Heart right ventricle (tissue), 16 donors: ENCODE measurements at regions of chr10 and their contacts with region 1.

Region 1: GRCh38 chr10:4767033-4767814 is 58.8 kb upstream of the AKR1E2 start:
- DNase-seq: peak in 1 of 2 donors; percentile 30
- ATAC-seq: peak in 6 of 8 donors; percentile 40 to 72 (median 66)
- H3K4me3 ChIP-seq: no peak overlapping the region
- H3K27ac ChIP-seq: peak overlapping the region in 9 of 10 donors; percentile 4 to 75 (median 39)
- H3K4me1 ChIP-seq: peaks cover 5 to 64% (median 38%) of the 10 kb centered on the region in 9 donors
- H3K27me3 ChIP-seq: no peaks in the 10 kb centered on the region
- CTCF ChIP-seq: peak; percentile 51 to 92 (median 82)

Region 2: DNA sequence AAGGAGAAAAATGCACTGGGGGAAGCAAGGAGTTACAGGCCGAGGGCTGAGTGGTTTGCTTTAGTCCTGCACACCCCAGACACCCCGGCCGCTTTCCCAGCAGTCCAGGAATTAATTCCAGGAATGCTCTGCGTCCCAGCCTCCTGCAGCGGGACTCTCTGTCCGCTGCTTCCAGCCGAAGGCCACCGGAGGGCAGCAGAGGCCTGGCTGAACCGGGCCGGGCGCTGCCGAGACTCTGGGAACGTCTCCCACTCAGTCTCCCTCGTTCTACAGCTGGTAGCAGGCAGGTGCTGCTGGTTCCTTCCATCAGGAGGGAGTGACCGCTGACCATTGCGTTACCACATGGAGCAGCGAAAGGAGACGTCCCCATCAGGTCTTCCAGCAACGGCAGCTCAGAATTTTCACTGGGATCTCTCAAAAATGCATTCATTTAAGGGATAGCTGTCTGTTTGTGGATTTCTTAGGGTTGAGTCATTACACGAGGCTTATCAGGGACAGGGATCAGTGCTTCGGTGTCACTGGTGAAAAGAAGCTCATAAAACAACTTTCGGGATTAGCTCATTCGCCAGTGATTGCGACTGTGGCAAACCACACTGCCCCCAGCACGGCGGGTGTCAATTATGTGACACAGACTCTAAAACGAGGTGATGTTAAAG is 1569.7 kb before region 1 on chr10:
- intact Hi-C with region 1: loop called (anchors 1 to 10 kb)
- DNase-seq: peak; percentile 77 to 83
- ATAC-seq: peak; percentile 88 to 95 (median 94)
- H3K4me3 ChIP-seq: peak overlapping the region in 9 of 10 donors; percentile 0 to 42 (median 30)
- H3K27ac ChIP-seq: peak overlapping the region in 5 of 10 donors; percentile 41 to 62 (median 43)
- H3K4me1 ChIP-seq: peaks cover 3 to 25% (median 9%) of the 10 kb centered on the region in 9 donors
- H3K27me3 ChIP-seq: peaks cover 0 to 21% (median 0%) of the 10 kb centered on the region in 7 donors
- CTCF ChIP-seq: peak in 8 of 9 donors; percentile 86 to 97 (median 93)

Region 3: GRCh38 chr10:3452173-3452626 is 1315.0 kb before region 1 on chr10:
- intact Hi-C with region 1: loop called in 1 of 10 experiments (anchors 10 kb)
- DNase-seq: peak in 1 of 2 donors; percentile 52
- ATAC-seq: peak in 7 of 8 donors; percentile 71 to 92 (median 84)
- H3K4me3 ChIP-seq: peak overlapping the region in 3 of 10 donors; percentile 2 to 20 (median 11)
- H3K27ac ChIP-seq: peak overlapping the region; percentile 10 to 85 (median 76)
- H3K4me1 ChIP-seq: peaks cover 0 to 49% (median 28%) of the 10 kb centered on the region in 9 donors
- H3K27me3 ChIP-seq: no peaks in the 10 kb centered on the region
- CTCF ChIP-seq: peak; percentile 21 to 72 (median 48)

Region 4: GRCh38 chr10:4241724-4242345 is 525.4 kb before region 1 on chr10:
- intact Hi-C with region 1: loop called in 2 of 10 experiments (anchors 5 to 10 kb)
- DNase-seq: peak in 1 of 2 donors; percentile 87
- ATAC-seq: peak; percentile 82 to 92 (median 90)
- H3K4me3 ChIP-seq: peak overlapping the region in 9 of 10 donors; percentile 10 to 56 (median 45)
- H3K27ac ChIP-seq: peak overlapping the region; percentile 72 to 96 (median 89)
- H3K4me1 ChIP-seq: peaks cover 0 to 62% (median 46%) of the 10 kb centered on the region in 9 donors
- H3K27me3 ChIP-seq: no peaks in the 10 kb centered on the region
- CTCF ChIP-seq: no peak

Region 5: GRCh38 chr10:4498711-4499251 is 268.4 kb before region 1 on chr10:
- intact Hi-C with region 1: loop called in 1 of 10 experiments (anchors 10 kb)
- DNase-seq: peak in 1 of 2 donors; percentile 23
- ATAC-seq: peak; percentile 77 to 93 (median 90)
- H3K4me3 ChIP-seq: no peak overlapping the region
- H3K27ac ChIP-seq: peak overlapping the region; percentile 14 to 90 (median 78)
- H3K4me1 ChIP-seq: peaks cover 5 to 24% (median 14%) of the 10 kb centered on the region in 9 donors
- H3K27me3 ChIP-seq: no peaks in the 10 kb centered on the region
- CTCF ChIP-seq: no peak

Region 6: GRCh38 chr10:4663162-4663904 is 103.9 kb before region 1 on chr10:
- intact Hi-C with region 1: loop called in 9 of 10 experiments (anchors 1 to 5 kb)
- DNase-seq: peak in 1 of 2 donors; percentile 88
- ATAC-seq: peak; percentile 84 to 95 (median 94)
- H3K4me3 ChIP-seq: peak overlapping the region in 5 of 10 donors; percentile 4 to 22 (median 13)
- H3K27ac ChIP-seq: peak overlapping the region; percentile 87 to 96 (median 92)
- H3K4me1 ChIP-seq: peaks cover 0 to 52% (median 36%) of the 10 kb centered on the region in 9 donors
- H3K27me3 ChIP-seq: no peaks in the 10 kb centered on the region
- CTCF ChIP-seq: no peak

Region 7: DNA sequence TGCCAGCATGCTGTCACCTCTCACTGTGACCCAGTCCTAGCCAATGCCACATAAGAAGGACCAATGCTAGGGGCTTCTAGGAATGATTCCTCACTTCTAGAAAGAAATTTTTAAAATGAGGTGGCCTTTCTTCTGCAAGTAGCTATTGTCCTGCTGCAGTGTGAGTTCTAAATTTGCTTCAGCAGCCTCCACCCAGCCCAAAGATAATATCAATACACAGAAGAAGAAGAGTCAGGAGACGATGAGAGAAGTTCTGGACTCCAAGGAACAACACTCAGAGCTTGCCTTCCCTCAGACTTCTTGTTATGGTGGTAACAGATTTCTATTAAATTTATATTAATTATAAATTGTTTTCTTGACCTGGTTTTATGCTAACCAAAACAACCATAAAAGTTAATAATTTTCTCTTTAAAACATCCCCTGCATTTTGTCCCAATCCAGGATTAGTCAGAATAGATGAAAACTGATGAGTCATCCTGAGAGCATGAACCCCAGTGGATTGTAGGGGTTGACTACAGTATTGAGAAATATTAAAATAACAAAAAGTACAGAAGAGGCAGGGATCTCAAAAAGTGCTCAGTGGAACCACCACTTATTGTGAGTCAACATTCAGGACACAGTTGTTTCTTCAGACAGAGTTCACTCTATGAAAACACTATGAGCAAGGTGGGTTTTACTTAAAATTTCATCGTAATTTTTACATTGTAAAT is 266.0 kb after region 1 on chr10:
- intact Hi-C with region 1: no loop called
- DNase-seq: no peak
- ATAC-seq: peak in 2 of 8 donors; percentile 24 to 37
- H3K4me3 ChIP-seq: no peak overlapping the region
- H3K27ac ChIP-seq: no peak overlapping the region
- H3K4me1 ChIP-seq: no peaks in the 10 kb centered on the region
- H3K27me3 ChIP-seq: no peaks in the 10 kb centered on the region
- CTCF ChIP-seq: no peak